BJ (cell line): ENCODE measurements at regions of chr20 and their contacts with region 1.

Region 1: GRCh38 chr20:3051385-3052019 is 5.7 kb downstream of the MRPS26 start:
- DNase-seq: no peak
- H3K4me3 ChIP-seq: no peak overlapping the region
- H3K27me3 ChIP-seq: no peaks in the 10 kb centered on the region
- CTCF ChIP-seq: no peak

Region 2: DNA sequence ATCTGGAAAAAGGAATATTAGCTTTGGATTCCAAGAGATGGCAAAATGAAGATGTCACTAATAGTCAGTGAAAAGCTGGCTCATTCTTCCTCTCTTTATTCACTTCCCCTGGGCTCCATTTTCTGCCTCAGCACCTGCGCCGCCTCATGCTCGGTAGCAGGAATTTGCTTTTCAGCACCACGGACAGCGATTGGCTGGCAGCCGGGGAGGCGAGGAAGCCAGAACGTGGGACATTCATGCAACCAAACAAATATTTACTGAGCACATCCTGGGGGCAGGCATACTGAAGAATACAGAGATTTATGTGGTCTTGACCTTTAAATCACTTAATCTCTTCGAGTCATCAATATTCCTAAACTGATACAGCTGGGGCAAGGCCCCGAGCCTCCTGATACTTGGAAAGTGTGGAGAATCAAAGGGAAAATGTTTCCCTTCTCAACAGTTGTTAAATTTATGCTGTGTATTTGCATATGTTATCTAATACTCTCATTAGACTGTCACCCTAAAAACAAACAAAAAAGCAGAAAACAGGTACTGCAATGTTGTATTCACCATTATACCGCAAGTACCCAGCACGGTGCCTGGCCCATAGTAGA is 1045.6 kb before region 1 on chr20:
- CTCF ChIA-PET with region 1: no interaction called
- POLR2A ChIA-PET with region 1: no interaction called
- DNase-seq: no peak
- H3K4me3 ChIP-seq: no peak overlapping the region
- H3K27me3 ChIP-seq: 0 out of 2 replicates have a peak, but pooled peaks cover 2% of the 10 kb centered on the region
- CTCF ChIP-seq: 0 out of 2 replicates have a peak, but pooled peaks have one; percentile 2

Region 3: DNA sequence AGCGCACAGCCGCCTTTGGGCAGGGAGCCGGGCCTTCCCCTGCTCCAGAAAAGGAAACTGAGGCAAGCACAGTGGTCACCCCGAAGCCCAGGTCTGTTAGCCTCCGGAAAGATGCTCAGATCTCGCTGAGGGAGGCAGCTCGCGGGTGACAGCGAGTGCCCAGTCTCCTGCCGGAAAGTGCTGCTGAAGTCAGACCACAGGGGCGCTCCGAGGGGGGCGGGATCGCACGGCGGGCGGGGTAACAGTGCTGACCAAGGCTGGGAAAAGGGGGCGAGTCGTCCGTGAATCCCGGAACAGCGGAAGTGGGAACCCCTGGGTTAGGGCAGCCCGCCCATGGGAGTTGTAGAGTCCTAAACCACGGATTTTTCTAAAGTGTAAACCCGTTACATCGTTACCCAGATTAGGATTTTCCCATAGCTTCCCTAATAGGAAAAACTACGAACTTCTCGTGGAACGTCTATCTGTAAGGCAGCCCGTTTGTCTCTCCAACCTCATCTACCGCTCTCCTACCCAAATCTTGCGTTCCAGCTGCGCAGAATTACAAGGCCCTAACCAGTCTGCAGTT is 210.5 kb before region 1 on chr20:
- CTCF ChIA-PET with region 1: no interaction called
- POLR2A ChIA-PET with region 1: no interaction called
- DNase-seq: no peak
- H3K4me3 ChIP-seq: peak overlapping the region; percentile 89
- H3K27me3 ChIP-seq: no peaks in the 10 kb centered on the region
- CTCF ChIP-seq: no peak

Region 4: DNA sequence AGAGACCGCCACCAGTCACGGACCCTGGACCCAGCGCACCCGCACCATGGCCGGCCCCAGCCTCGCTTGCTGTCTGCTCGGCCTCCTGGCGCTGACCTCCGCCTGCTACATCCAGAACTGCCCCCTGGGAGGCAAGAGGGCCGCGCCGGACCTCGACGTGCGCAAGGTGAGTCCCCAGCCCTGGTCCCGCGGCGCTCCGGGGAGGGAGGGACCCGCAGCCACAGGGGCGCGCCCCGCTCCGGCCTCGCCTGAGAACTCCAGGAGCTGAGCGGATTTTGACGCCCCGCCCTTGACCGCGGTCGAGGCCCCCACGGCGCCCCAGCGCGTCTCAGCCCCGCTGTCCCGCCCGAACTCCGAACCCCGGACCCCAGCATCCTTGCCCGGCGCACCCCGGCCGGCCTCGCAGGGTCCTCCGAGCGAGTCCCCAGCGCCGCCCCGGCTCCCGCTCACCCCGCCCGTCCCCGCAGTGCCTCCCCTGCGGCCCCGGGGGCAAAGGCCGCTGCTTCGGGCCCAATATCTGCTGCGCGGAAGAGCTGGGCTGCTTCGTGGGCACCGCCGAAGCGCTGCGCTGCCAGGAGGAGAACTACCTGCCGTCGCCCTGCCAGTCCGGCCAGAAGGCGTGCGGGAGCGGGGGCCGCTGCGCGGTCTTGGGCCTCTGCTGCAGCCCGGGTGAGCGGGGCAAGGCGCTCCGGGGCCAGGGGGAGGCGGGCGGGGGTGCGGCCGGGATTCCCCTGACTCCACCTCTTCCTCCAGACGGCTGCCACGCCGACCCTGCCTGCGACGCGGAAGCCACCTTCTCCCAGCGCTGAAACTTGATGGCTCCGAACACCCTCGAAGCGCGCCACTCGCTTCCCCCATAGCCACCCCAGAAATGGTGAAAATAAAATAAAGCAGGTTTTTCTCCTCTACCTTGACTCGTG is 20.4 kb after region 1 on chr20 and contains the start of gene OXT:
- CTCF ChIA-PET with region 1: interaction called, 15 read pairs
- POLR2A ChIA-PET with region 1: no interaction called
- DNase-seq: no peak
- H3K4me3 ChIP-seq: peak within 1 kb of the TSS; percentile 41
- H3K27me3 ChIP-seq: peaks cover 8% of the 10 kb centered on the region
- CTCF ChIP-seq: no peak
- polyA plus RNA-seq, gene OXT: not detected in 2 replicates

Region 5: DNA sequence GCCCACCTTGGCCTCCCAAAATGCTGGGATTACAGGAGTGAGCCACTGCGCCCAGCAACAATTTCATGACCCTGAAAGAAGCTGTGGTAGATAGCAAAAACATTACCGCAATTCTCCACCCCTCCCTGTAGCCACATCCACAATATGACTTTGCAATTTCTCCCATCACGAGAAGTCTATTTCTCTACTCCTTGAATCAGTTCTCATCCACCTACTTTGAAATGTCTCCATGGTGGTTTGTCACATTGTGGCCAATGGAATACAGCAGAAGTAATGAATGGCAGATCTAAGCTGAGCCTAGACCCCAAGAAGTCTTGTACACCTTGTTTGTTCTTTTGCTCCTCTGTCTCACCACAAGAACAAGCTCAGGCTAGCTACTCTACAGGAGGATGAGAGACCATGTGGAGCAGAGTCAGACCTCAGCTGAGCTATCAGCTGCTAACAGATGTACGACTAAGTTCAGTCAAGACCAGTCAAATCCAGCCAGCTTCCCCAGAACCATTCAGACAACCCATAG is 26.2 kb after region 1 on chr20:
- CTCF ChIA-PET with region 1: interaction called, 25 read pairs
- POLR2A ChIA-PET with region 1: no interaction called
- DNase-seq: no peak
- H3K4me3 ChIP-seq: no peak overlapping the region
- H3K27me3 ChIP-seq: peaks cover 30% of the 10 kb centered on the region
- CTCF ChIP-seq: no peak

Region 6: DNA sequence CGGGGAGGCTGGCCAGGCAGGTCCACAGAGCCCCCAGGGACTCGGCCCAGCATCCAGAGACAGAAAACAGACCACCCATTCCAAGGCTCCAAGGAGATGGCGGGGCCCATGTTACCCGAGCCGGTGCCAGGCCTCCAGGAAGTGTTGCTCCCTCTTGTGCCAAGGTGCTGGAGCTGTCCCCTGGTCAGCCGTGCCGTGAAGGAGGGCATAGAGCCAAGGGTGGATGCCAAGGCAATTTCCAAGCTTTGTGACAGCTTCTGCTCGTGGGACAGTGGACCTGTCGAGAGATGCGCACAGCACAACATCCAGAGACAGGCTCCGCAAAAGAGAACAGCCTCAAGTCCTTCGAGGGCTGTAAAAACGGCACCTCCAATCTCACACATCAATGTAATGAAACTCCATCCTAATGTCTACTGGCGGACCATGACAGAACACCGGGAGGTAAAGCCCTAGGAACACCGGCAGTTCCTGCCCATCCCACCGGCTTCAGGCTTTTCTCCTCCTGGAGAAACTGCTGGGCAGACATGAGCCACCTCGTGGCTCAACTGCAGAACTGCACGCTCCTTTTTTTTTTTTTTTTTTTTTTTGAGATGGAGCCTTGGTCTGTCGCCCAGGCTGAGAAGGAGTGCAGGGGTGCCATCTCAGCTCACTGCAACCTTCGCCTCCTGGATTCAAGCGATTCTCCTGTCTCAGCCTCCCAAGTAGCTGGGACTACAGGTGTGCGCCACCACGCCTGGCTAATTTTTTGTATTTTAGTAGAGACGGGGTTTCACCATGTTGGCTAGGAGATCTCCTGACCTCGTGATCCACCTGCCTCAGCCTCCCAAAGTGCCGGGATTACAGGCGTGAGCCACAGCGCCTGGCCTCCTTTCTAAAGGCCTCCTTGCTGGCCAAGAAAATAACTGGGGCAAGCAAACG is 63.9 kb after region 1 on chr20:
- CTCF ChIA-PET with region 1: interaction called, 35 read pairs
- POLR2A ChIA-PET with region 1: no interaction called
- DNase-seq: no peak
- H3K4me3 ChIP-seq: no peak overlapping the region
- H3K27me3 ChIP-seq: no peaks in the 10 kb centered on the region
- CTCF ChIP-seq: peak; percentile 81